HCT116 (cell line): ENCODE measurements at regions of chr7 and their contacts with region 1.

Region 1: DNA sequence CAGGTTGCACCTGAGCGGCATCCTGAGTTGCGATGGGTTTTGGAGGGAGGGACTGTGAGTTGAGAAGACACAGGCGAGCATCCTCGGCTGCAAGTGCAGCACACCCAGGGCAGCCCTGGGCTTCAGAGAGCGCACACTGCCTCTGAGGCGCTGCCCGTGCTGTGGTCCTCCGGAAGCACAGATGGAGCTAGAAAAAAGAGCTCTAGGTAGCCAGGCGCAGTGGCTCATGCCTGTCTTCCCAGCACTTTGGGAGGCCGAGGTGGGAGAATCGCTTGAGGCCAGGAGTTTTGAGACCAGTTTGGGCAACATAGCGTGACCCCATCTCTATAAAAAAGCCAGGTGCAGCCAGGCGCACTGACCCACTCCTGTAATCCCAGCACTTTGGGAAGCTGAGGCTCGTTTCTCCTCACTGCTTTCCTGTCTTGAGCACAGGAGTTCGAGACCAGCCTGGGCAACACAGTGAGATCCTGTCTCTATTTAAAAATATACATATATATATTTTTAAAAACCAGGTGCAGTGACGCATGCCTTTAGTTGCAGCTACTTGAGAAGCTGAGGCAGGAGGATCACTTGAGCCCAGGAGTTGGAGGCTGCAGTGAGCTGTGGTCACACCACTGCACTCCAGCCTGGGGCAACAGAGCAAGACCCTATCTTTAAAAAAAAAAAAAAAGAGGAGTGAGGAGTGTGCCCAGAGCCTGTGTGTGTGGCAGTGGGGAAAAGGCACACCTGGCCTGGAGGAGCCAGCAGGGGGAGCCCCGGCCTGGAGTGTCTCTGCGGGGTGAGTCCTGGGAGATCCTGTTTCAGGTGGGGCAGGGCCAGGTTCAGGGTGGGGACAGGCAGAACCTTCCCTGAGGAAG is 9.3 kb upstream of the ARPC1B start:
- DNase-seq: no peak
- ATAC-seq: peak; percentile 98
- H3K4me3 ChIP-seq: no peak overlapping the region
- H3K27ac ChIP-seq: no peak overlapping the region
- H3K4me1 ChIP-seq: peaks cover 5 to 22% of the 10 kb centered on the region in 2 experiments
- H3K27me3 ChIP-seq: no peaks in the 10 kb centered on the region
- CTCF ChIP-seq: peak; percentile 63 to 88 (median 66); a peak in 5 of 6 replicates
- POLR2A ChIP-seq: no peak
- RAD21 ChIP-seq: peak; percentile 69

Region 2: GRCh38 chr7:99290980-99291607 is 74.1 kb before region 1 on chr7:
- CTCF ChIA-PET with region 1: no interaction called
- POLR2A ChIA-PET with region 1: no interaction called
- RAD21 ChIA-PET with region 1: no interaction called
- intact Hi-C with region 1: no loop called
- DNase-seq: no peak
- ATAC-seq: no peak
- H3K4me3 ChIP-seq: no peak overlapping the region
- H3K27ac ChIP-seq: no peak overlapping the region
- H3K4me1 ChIP-seq: no peaks in the 10 kb centered on the region
- H3K27me3 ChIP-seq: no peaks in the 10 kb centered on the region
- CTCF ChIP-seq: no peak
- POLR2A ChIP-seq: no peak
- RAD21 ChIP-seq: no peak

Region 3: DNA sequence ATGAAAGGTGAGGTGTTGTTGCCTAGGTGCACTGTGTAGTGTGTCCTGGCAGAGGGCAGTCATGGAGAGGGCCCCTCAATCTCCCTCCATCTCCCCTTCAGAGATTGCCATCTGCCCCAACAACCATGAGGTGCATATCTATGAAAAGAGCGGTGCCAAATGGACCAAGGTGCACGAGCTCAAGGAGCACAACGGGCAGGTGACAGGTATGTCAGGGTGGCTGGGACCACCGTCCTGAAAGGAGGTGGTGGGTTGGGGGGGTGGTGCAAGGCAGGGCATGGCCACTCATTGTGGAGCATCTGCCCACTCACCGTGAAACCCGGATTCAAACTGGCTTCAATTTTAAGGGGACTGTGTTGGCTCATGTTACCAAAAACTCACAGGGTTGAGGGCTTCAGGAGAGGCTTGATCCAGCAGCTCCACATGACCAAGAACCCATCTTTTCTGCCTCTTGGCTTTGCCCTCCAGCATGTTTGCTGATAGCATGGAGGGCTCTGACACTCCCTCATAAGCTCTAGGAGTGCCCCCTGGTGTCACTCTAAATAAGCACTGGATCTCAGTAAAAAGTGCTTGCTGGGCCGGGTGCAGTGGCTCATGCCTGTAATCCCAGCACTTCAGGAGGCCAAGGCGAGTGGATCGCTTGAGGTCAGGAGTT is 21.5 kb after region 1 on chr7:
- CTCF ChIA-PET with region 1: no interaction called
- POLR2A ChIA-PET with region 1: no interaction called
- RAD21 ChIA-PET with region 1: no interaction called
- intact Hi-C with region 1: loop called (anchors 1 kb)
- DNase-seq: no peak
- ATAC-seq: peak; percentile 81
- H3K4me3 ChIP-seq: no peak overlapping the region
- H3K27ac ChIP-seq: 0 out of 2 replicates have a peak overlapping the region, but pooled peaks have one; percentile 9
- H3K4me1 ChIP-seq: peaks cover 0 to 2% of the 10 kb centered on the region in 2 experiments; a peak in 1 of 4 replicates
- H3K27me3 ChIP-seq: no peaks in the 10 kb centered on the region
- CTCF ChIP-seq: peak; percentile 46 to 59 (median 48); a peak in 5 of 6 replicates
- POLR2A ChIP-seq: no peak
- RAD21 ChIP-seq: peak; percentile 73

Region 4: GRCh38 chr7:99616359-99617191 is 251.4 kb after region 1 on chr7 and contains the start of gene ZSCAN25:
- CTCF ChIA-PET with region 1: no interaction called
- POLR2A ChIA-PET with region 1: no interaction called
- RAD21 ChIA-PET with region 1: no interaction called
- intact Hi-C with region 1: no loop called
- DNase-seq: peak; percentile 91
- ATAC-seq: peak; percentile 94
- H3K4me3 ChIP-seq: peak within 1 kb of the TSS; percentile 99
- H3K27ac ChIP-seq: peak within 1 kb of the TSS; percentile 61
- H3K4me1 ChIP-seq: peaks cover 9 to 24% of the 10 kb centered on the region in 2 experiments
- H3K27me3 ChIP-seq: no peaks in the 10 kb centered on the region
- CTCF ChIP-seq: peak; percentile 43 to 53 (median 51)
- POLR2A ChIP-seq: peak; percentile 77
- RAD21 ChIP-seq: peak; percentile 65
- total RNA-seq, gene ZSCAN25: 14.0 TPM

Region 5: GRCh38 chr7:99642027-99642426 is 276.8 kb after region 1 on chr7:
- CTCF ChIA-PET with region 1: no interaction called
- POLR2A ChIA-PET with region 1: no interaction called
- RAD21 ChIA-PET with region 1: no interaction called
- intact Hi-C with region 1: no loop called
- DNase-seq: no peak
- ATAC-seq: no peak
- H3K4me3 ChIP-seq: no peak overlapping the region
- H3K27ac ChIP-seq: no peak overlapping the region
- H3K4me1 ChIP-seq: no peaks in the 10 kb centered on the region
- H3K27me3 ChIP-seq: no peaks in the 10 kb centered on the region
- CTCF ChIP-seq: no peak
- POLR2A ChIP-seq: no peak
- RAD21 ChIP-seq: no peak